Psoas muscle (tissue), 8 donors: ENCODE measurements at regions of chr9 and their contacts with region 1.

Region 1: GRCh38 chr9:113275157-113276131 is at the starts of genes CDC26 and PRPF4:
- DNase-seq: peak; percentile 96 to 98
- ATAC-seq: peak; percentile 98 to 99 (median 99)
- H3K4me3 ChIP-seq: peak within 1 kb of the TSS; percentile 95
- H3K27ac ChIP-seq: peak within 1 kb of the TSS; percentile 96
- H3K4me1 ChIP-seq: peaks cover 17% of the 10 kb centered on the region
- H3K27me3 ChIP-seq: no peaks in the 10 kb centered on the region
- CTCF ChIP-seq: no peak
- total RNA-seq, gene CDC26: 22.4 to 25.6 (median 24.0) TPM
- total RNA-seq, gene PRPF4: 10.9 to 22.5 (median 19.8) TPM

Region 2: DNA sequence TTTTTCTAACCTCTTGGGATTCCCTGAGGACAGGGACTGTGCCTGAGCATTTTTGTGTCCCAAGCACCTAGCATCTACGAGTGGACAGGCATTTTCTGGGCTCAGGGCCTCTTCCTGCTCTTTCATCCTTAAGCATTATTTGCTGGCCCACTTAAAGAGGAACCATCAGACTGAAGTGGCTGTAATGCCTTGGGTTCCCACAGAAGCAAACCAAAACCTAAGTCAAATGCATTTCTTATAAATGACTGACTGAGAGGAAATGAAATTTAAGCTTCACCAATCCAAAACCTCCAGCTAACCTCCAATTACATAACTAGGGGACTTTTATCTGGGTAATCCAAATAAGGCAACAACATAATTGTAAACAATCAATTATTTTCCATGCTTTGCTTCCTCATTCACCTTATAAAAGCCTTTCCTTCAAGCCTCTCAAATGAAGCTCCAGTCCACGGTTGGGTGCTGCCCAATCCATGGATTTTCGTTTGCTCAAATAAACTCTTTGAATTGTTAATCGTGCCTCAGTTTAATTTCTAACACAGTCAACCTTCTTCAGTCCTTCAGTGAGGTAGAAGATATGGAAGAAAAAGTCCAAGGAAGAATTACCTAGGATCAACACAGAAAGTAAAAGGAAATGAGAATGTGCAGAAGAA is 149.9 kb before region 1 on chr9:
- intact Hi-C with region 1: no loop called
- DNase-seq: no peak
- ATAC-seq: no peak
- H3K4me3 ChIP-seq: no peak overlapping the region
- H3K27ac ChIP-seq: no peak overlapping the region
- H3K4me1 ChIP-seq: no peaks in the 10 kb centered on the region
- H3K27me3 ChIP-seq: peaks cover 0 to 11% (median 0%) of the 10 kb centered on the region in 3 donors
- CTCF ChIP-seq: no peak

Region 3: GRCh38 chr9:113221003-113221799 is 54.2 kb before region 1 on chr9 and contains the starts of genes FKBP15 and SLC31A1:
- intact Hi-C with region 1: loop called (anchors 2 kb)
- DNase-seq: peak; percentile 98
- ATAC-seq: peak; percentile 100
- H3K4me3 ChIP-seq: peak within 1 kb of the TSS; percentile 79
- H3K27ac ChIP-seq: peak within 1 kb of the TSS; percentile 91
- H3K4me1 ChIP-seq: peaks cover 22% of the 10 kb centered on the region
- H3K27me3 ChIP-seq: no peaks in the 10 kb centered on the region
- CTCF ChIP-seq: no peak
- total RNA-seq, gene FKBP15: 13.6 to 18.4 (median 17.9) TPM
- total RNA-seq, gene SLC31A1: 4.1 to 6.7 (median 4.8) TPM

Region 4: DNA sequence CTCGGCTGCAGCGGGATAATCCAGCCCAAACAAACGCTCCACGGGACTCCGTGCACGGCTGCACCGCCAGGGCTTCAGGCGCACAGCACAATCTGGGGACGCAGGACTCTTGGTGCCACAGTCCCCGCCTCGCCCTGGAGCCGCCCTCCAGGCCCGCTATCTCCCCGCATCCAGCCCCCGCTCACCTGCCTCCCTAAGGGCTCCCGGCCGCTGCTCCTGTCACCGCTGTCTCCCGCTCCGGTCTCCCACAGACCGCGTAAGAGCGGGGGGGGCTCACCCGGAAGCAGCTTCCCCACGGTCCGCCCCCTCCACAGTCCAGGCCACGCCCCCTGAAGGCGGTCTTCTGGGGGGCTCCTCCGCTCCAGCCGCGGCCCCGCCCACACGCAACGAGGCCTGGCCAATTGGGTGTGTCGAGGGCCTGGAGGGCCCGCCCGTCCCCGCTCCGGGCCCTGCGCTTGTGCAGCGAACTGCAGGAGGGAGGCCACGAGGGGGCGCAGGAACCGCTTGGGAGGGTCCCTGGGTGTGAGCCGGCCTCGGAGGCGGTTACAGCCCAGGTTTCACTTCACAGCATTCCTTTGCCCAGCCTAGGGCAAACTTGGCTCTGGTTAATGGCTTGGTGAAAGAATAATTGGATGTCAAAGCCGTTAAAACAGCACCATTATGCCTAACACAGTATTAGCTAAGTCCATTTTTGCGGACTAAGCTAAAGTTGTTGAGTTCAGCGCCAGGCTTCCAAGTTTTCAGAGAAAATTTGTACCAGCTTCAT is 125.8 kb after region 1 on chr9 and contains the start of gene ALAD:
- intact Hi-C with region 1: loop called (anchors 5 kb)
- DNase-seq: peak; percentile 100
- ATAC-seq: peak; percentile 100
- H3K4me3 ChIP-seq: peak within 1 kb of the TSS; percentile 77
- H3K27ac ChIP-seq: peak within 1 kb of the TSS; percentile 69
- H3K4me1 ChIP-seq: peaks cover 14% of the 10 kb centered on the region
- H3K27me3 ChIP-seq: no peaks in the 10 kb centered on the region
- CTCF ChIP-seq: peak; percentile 93
- total RNA-seq, gene ALAD: 13.1 to 29.0 (median 19.8) TPM

Region 5: GRCh38 chr9:113591001-113591898 is 315.8 kb after region 1 on chr9:
- intact Hi-C with region 1: loop called in 1 of 2 experiments (anchors 10 kb)
- DNase-seq: peak; percentile 81 to 91
- ATAC-seq: peak; percentile 63 to 75 (median 72)
- H3K4me3 ChIP-seq: no peak overlapping the region
- H3K27ac ChIP-seq: peak overlapping the region; percentile 60
- H3K4me1 ChIP-seq: peaks cover 29% of the 10 kb centered on the region
- H3K27me3 ChIP-seq: no peaks in the 10 kb centered on the region
- CTCF ChIP-seq: peak; percentile 97